WTC11 (cell line): ENCODE measurements at regions of chr3 and their contacts with region 1.

Region 1: DNA sequence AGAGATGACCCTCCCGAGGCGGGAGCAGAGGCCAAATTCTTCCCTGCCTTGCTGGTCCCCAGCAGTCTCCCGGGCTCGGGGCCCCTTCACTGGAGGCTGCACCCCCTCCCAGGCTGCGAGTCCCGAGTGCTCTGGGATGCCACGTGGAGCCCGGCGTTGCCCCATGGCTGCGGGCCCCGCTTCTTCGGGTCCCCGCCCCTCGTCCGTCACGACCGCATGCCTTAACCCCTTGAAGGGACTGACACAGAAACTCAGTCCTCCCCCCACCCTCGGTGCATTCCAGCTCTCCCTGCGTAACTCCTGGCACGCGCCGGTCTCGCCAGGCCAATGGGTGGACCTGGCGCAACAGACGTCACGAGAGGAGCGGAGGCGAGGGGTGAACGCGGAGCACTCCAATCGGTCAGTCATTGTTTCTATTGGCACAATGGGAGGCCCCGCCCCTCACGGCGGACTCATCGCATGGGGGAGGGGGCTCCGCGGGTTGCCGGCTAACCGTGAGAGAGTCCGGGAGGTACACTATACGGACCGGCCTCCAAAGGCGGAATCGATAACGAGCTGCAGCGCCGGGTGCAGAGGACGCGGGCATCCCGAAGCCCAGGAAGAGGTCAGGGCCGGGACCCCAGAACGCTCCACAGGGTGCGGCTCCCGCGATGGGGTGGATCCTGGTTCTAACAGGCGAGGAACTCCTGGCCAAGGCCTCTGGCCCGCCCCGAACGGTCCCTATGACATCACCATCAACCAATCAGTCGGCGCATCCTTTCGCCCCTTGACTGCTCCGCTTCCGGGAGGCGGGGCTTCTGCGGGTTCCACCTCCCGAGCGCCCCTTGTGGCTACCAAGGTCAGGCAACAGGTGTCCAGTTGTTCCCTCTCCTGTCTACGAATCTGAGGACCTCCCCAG is 978 bp upstream of the CELSR3 start:
- DNase-seq: peak; percentile 99
- ATAC-seq: peak; percentile 79
- H3K4me3 Mint-ChIP-seq: peak overlapping the region; percentile 88
- H3K27ac Mint-ChIP-seq: peak overlapping the region; percentile 100
- H3K4me1 Mint-ChIP-seq: peaks cover 14% of the 10 kb centered on the region
- H3K27me3 Mint-ChIP-seq: no peaks in the 10 kb centered on the region
- CTCF ChIP-seq: peak; percentile 64; the same call in 1 of the 2 replicates

Region 2: GRCh38 chr3:48465531-48466378 is 197.9 kb before region 1 on chr3:
- CTCF ChIA-PET with region 1: no interaction called
- POLR2A ChIA-PET with region 1: no interaction called
- DNase-seq: peak; percentile 92
- ATAC-seq: peak; percentile 94
- H3K4me3 Mint-ChIP-seq: peak overlapping the region; percentile 7
- H3K27ac Mint-ChIP-seq: peak overlapping the region; percentile 97
- H3K4me1 Mint-ChIP-seq: peaks cover 21% of the 10 kb centered on the region
- H3K27me3 Mint-ChIP-seq: no peaks in the 10 kb centered on the region
- CTCF ChIP-seq: no peak

Region 3: DNA sequence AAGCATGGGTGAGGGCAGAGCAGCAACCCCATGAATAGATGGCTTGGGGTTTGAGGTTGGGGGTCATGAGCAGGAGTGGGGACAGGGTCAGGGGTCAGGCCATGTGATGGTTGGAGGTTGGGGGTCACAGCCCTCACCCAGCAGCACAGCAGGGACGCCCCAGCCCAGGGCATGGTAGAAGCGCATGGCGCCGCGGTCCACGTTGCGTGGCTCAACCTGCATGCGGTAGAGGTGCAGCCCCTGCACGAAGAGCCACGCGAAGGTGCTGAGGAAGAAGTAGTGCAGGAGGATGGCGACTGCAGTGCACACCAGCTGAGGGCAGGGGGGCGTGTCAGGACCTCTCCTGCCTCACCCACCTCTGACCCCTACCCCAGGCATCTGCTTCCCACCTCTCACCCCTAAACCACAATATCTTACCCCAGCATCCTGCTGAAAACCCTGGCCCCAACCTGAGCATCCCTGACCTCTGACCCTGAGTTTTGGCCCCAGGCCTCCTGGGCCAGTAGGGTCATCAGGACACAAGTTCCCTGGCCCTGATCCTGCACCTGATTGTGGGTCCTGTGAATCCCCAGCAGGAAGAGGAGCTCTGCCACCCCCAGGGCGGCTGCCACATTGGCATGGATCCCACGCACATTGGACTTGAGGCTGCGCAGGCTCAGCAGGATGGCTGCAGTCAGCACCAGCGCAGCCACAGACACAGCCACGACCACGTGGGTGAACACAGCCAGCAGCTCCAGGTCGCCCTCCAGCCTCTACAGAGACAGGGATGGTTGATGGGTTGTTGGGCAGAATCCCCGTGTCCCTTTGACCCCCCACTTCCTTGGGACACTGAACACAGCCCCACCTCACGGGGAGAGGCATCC is 18.5 kb before region 1 on chr3:
- CTCF ChIA-PET with region 1: no interaction called
- POLR2A ChIA-PET with region 1: no interaction called
- DNase-seq: no peak
- ATAC-seq: no peak
- H3K4me3 Mint-ChIP-seq: no peak overlapping the region
- H3K27ac Mint-ChIP-seq: no peak overlapping the region
- H3K4me1 Mint-ChIP-seq: no peaks in the 10 kb centered on the region
- H3K27me3 Mint-ChIP-seq: no peaks in the 10 kb centered on the region
- CTCF ChIP-seq: no peak

Region 4: DNA sequence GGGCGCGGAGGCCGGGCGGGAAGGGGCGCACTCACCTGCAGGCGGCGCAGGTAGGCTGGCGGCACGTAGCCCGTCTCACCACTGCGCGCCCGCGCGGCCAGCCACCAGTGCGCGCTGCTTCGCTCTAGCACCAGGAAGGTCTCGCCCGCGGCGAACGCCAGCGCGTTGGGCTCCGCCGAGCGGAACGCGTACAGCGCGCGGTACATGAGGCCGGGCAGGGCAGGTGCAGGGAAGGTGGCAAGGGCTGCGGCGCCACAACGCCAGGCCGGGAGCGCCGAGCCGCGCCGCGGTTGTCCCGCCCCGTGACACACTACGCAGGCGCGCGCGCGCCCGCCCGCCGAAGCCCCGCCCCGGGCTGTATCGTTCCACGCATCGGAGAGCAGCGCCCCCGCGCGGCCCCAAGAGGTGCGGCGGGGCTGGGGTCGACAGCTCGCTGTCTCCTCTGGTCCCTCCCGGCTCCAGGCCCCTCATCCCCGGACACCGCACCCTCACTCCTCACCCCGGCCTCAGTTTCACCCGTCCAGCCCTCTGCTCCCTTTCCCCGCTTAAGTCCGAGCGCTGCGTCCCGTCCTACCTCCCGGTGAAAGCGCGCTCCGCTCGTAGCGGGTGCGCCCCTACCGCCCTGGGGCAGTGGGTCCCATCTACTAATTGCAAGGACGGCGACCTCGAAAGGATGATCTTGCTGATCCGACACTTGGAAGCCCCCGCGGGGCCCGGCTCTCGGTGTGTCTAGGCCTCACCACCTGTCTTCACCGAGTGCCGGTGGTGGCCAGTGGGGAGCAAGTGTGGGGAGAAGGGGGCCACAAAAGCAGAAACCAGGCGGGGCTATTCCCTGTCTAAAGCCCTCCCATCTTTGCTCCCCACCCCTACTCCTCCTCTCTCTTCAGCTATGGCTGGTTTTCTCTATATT is 22.2 kb after region 1 on chr3 and contains the start of gene NCKIPSD:
- CTCF ChIA-PET with region 1: interaction called, 27 read pairs
- POLR2A ChIA-PET with region 1: interaction called, 8 read pairs
- DNase-seq: peak; percentile 91
- ATAC-seq: peak; percentile 88
- H3K4me3 Mint-ChIP-seq: peak within 1 kb of the TSS; percentile 89
- H3K27ac Mint-ChIP-seq: peak within 1 kb of the TSS; percentile 27
- H3K4me1 Mint-ChIP-seq: peaks cover 16% of the 10 kb centered on the region
- H3K27me3 Mint-ChIP-seq: no peaks in the 10 kb centered on the region
- CTCF ChIP-seq: peak; percentile 82
- total RNA-seq, gene NCKIPSD: 40.1 to 50.1 TPM (median 47.1 TPM) in 3 replicates

Region 5: GRCh38 chr3:48997714-48998641 is 334.3 kb after region 1 on chr3:
- CTCF ChIA-PET with region 1: no interaction called
- POLR2A ChIA-PET with region 1: no interaction called
- DNase-seq: peak; percentile 65
- ATAC-seq: peak; percentile 11
- H3K4me3 Mint-ChIP-seq: no peak overlapping the region
- H3K27ac Mint-ChIP-seq: no peak overlapping the region
- H3K4me1 Mint-ChIP-seq: peaks cover 12% of the 10 kb centered on the region
- H3K27me3 Mint-ChIP-seq: no peaks in the 10 kb centered on the region
- CTCF ChIP-seq: no peak